ENCODE measurements at regions of chr18 and their contacts with region 1.

Region 1: GRCh38 chr18:22977847-22978701 is 44.9 kb downstream of the RBBP8 start:
- DNase-seq: no peak
- H3K4me3 Mint-ChIP-seq: peak overlapping the region; percentile 0
- H3K27ac Mint-ChIP-seq: peak overlapping the region; percentile 61
- H3K4me1 Mint-ChIP-seq: peaks cover 20% of the 10 kb centered on the region
- H3K27me3 Mint-ChIP-seq: no peaks in the 10 kb centered on the region

Region 2: GRCh38 chr18:22831441-22831904 is 146.6 kb before region 1 on chr18:
- intact Hi-C with region 1: loop called (anchors 10 kb)
- DNase-seq: no peak
- H3K4me3 Mint-ChIP-seq: no peak overlapping the region
- H3K27ac Mint-ChIP-seq: peak overlapping the region; percentile 14
- H3K4me1 Mint-ChIP-seq: peaks cover 3% of the 10 kb centered on the region
- H3K27me3 Mint-ChIP-seq: peaks cover 20% of the 10 kb centered on the region

Region 3: GRCh38 chr18:23012249-23012648 is 34.2 kb after region 1 on chr18:
- intact Hi-C with region 1: loop called (anchors 1 kb)
- DNase-seq: peak; percentile 73
- H3K4me3 Mint-ChIP-seq: no peak overlapping the region
- H3K27ac Mint-ChIP-seq: peak overlapping the region; percentile 25
- H3K4me1 Mint-ChIP-seq: peaks cover 20% of the 10 kb centered on the region
- H3K27me3 Mint-ChIP-seq: no peaks in the 10 kb centered on the region

Measured in activated CD4-positive, alpha-beta T cell treated with anti-CD3 and anti-CD28 coated beads, Interleukin-2, amount 10 ng/mL, durations not matched to agents 24 days and 14 days (primary cell).